ENCODE measurements at regions of chr6 and their contacts with region 1.

Region 1: DNA sequence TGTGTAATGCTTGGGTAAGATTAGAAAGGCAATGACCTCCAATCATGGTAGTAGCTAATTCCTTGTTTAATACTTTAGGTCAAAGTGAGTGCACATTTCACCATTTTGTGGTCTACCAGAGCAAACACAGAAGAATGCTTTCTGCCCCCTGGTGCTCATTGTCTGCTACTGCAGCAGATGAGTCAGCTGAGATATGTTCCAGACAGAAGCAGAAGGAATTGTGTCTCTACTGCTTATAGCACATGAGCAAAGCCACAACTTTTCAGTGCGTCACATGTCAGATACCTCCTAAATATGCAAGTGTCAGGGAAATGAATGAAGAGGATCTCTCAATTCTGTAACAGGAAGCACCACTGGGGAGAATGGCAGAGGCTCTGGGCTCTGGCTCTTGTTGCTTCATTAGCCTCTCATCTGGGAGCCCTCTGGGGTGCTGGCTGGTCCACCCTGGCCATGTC is 308.9 kb downstream of the ALDH8A1 start:
- DNase-seq: peak; percentile 83
- ATAC-seq: peak; percentile 88
- H3K4me3 Mint-ChIP-seq: no peak overlapping the region
- H3K27ac Mint-ChIP-seq: no peak overlapping the region
- H3K4me1 Mint-ChIP-seq: peaks cover 23% of the 10 kb centered on the region
- H3K27me3 Mint-ChIP-seq: no peaks in the 10 kb centered on the region

Region 2: GRCh38 chr6:134247231-134247833 is 393.7 kb before region 1 on chr6:
- CTCF ChIA-PET with region 1: interaction called, 4 read pairs
- POLR2A ChIA-PET with region 1: no interaction called
- intact Hi-C with region 1: loop called in 1 of 2 experiments (anchors 5 kb)
- DNase-seq: peak; percentile 84
- ATAC-seq: peak; percentile 91
- H3K4me3 Mint-ChIP-seq: peak overlapping the region; percentile 16
- H3K27ac Mint-ChIP-seq: peak overlapping the region; percentile 94
- H3K4me1 Mint-ChIP-seq: peaks cover 56% of the 10 kb centered on the region
- H3K27me3 Mint-ChIP-seq: no peaks in the 10 kb centered on the region

Region 3: GRCh38 chr6:134436281-134436815 is 204.7 kb before region 1 on chr6:
- CTCF ChIA-PET with region 1: interaction called, 4 read pairs
- POLR2A ChIA-PET with region 1: no interaction called
- intact Hi-C with region 1: loop called (anchors 2 to 5 kb)
- DNase-seq: peak; percentile 84
- ATAC-seq: peak; percentile 90
- H3K4me3 Mint-ChIP-seq: no peak overlapping the region
- H3K27ac Mint-ChIP-seq: peak overlapping the region; percentile 80
- H3K4me1 Mint-ChIP-seq: peaks cover 36% of the 10 kb centered on the region
- H3K27me3 Mint-ChIP-seq: no peaks in the 10 kb centered on the region

Region 4: GRCh38 chr6:134619789-134620188 is 21.2 kb before region 1 on chr6:
- CTCF ChIA-PET with region 1: interaction called, 26 read pairs
- POLR2A ChIA-PET with region 1: interaction called, 15 read pairs
- intact Hi-C with region 1: no loop called
- DNase-seq: no peak
- ATAC-seq: no peak
- H3K4me3 Mint-ChIP-seq: no peak overlapping the region
- H3K27ac Mint-ChIP-seq: no peak overlapping the region
- H3K4me1 Mint-ChIP-seq: peaks cover 4% of the 10 kb centered on the region
- H3K27me3 Mint-ChIP-seq: no peaks in the 10 kb centered on the region

Region 5: DNA sequence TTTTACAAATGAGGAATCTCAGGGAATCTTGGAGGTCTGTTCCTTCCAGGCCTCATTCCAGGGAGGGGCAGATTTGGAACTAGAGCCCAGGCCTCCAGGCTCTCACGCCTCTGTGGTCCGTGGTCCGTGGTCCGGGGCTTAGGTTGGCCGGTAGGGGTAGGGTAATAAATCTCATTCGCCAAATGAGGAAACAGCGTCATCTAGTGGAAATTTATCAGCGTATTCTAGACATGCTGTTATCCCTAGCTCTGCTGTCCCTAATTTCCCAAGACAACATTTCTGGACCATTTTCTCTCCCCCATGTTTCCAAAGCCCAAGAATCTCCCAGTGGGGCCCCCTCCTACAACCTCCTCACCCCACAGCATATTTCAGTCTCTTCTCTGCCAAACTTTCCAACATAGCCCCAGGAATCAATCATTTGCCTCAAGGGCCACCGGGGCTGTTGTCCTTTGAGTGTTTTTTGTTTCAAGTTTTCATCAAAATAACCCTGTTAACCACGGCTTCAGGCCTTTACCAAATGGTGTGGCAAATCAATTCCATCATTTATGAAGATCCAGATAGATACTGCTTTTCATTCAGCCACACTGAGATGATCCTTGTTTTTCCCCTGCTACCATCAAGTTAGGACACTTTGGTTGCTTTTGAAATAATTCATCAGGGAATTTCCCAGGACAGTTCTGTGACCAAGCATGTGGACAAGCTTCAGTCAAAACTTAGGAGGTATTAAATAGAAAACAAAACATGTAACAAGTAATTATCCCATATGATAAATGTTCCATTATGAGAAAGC is 182.1 kb after region 1 on chr6:
- CTCF ChIA-PET with region 1: interaction called, 4 read pairs
- POLR2A ChIA-PET with region 1: no interaction called
- intact Hi-C with region 1: loop called (anchors 2 to 5 kb)
- DNase-seq: peak; percentile 36
- ATAC-seq: peak; percentile 86
- H3K4me3 Mint-ChIP-seq: no peak overlapping the region
- H3K27ac Mint-ChIP-seq: no peak overlapping the region
- H3K4me1 Mint-ChIP-seq: peaks cover 4% of the 10 kb centered on the region
- H3K27me3 Mint-ChIP-seq: peaks cover 2% of the 10 kb centered on the region

Region 6: DNA sequence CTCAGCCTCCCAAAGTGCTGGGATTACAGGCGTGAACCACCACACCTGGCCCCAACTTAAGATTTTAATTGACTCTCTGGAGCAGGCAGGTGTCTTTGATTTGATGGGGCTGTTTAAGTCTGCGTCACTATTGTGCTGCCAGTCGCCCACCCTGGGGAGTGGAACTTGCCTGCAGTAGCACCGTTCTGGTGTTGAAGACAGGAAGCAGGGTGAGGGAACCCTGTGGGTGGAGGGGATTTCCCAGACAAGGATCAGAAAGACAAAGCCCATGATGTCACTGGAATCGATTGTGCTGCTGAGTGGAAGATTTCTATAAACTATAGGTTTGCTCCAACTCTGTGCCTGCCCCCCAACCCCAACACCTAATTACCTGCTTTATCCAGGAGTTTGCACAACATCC is 297.9 kb after region 1 on chr6:
- CTCF ChIA-PET with region 1: interaction called, 6 read pairs
- POLR2A ChIA-PET with region 1: no interaction called
- intact Hi-C with region 1: loop called (anchors 2 to 10 kb)
- DNase-seq: peak; percentile 83
- ATAC-seq: peak; percentile 98
- H3K4me3 Mint-ChIP-seq: no peak overlapping the region
- H3K27ac Mint-ChIP-seq: peak overlapping the region; percentile 44
- H3K4me1 Mint-ChIP-seq: peaks cover 11% of the 10 kb centered on the region
- H3K27me3 Mint-ChIP-seq: no peaks in the 10 kb centered on the region